A549 (cell line): ENCODE measurements at regions of chr2 and their contacts with region 1.

Region 1: DNA sequence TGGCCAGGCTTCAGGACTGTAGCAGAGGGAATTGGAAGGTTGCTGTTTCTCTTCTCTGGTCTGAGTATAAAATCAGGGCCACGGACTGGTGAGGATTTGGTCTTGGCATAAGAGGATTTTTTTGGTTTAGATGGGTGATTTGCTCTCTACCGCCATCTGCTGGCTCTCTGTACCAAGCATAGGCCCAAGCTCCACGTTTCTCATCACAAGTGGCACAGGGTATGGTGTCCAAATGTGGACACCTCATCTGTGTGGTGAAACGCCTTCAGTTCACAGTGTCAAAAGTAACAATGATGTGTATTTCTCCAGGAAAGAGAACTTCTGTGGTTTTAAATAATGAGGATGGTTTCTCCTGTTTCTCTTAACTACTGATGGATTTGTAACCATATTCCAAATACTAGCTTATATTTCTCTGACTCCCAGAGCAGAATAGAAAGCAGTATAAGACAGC is 115.1 kb downstream of the EML6 start:
- DNase-seq: peak; percentile 69 to 75
- ATAC-seq: peak; percentile 89 to 95
- H3K4me3 ChIP-seq: no peak overlapping the region
- H3K27ac ChIP-seq: no peak overlapping the region
- H3K4me1 ChIP-seq: 0 out of 3 replicates have a peak, but pooled peaks cover 2% of the 10 kb centered on the region
- CTCF ChIP-seq: peak; percentile 96
- EP300 ChIP-seq: no peak
- POLR2A ChIP-seq: no peak
- RAD21 ChIP-seq: peak; percentile 79

Region 2: DNA sequence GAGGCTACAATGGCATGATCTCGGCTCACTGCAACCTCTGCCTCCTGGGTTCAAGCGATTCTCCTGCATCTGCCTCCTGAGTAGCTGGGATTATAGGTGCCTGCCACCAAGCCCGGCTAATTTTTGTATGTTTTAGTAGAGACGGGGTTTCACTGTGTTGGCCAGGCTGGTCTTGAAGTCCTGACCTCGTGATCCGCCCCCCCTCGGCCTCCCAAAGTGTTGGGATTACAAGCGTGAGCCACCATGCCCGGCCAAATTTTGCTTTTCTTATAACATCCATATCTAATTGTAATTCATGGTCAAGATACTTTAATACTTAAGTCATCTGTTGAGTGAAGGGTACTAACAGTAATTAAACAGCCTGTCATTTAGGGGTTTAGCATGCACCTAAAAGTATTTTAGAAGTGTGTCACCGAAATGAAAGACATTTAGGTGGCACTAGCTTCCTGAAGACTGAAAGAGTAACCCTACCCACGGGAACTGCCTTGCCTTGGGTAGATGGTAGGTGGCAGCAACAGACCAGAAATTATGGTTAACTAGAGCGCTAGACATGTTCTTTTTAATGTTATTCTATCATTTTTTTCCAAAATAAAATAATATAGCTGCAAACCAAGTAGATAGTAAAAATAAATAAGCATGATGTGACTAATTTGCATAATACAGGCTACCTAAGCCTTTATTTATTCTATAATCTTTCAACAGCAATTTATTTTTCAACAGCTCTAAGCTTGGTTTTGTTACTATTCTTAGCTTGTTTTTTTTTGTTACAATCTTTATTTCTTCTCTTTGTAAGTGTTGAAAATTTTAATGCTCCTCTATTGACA is 731.8 kb before region 1 on chr2:
- CTCF ChIA-PET with region 1: interaction called, 24 read pairs
- POLR2A ChIA-PET with region 1: no interaction called
- DNase-seq: peak; percentile 51 to 72
- ATAC-seq: peak; percentile 83 to 88
- H3K4me3 ChIP-seq: no peak overlapping the region
- H3K27ac ChIP-seq: peak overlapping the region in 1 of 2 experiments; percentile 22; a peak in 1 of 6 replicates
- H3K4me1 ChIP-seq: peaks cover 19% of the 10 kb centered on the region
- CTCF ChIP-seq: peak; percentile 94
- EP300 ChIP-seq: no peak
- POLR2A ChIP-seq: no peak
- RAD21 ChIP-seq: peak; percentile 92 to 94

Region 3: DNA sequence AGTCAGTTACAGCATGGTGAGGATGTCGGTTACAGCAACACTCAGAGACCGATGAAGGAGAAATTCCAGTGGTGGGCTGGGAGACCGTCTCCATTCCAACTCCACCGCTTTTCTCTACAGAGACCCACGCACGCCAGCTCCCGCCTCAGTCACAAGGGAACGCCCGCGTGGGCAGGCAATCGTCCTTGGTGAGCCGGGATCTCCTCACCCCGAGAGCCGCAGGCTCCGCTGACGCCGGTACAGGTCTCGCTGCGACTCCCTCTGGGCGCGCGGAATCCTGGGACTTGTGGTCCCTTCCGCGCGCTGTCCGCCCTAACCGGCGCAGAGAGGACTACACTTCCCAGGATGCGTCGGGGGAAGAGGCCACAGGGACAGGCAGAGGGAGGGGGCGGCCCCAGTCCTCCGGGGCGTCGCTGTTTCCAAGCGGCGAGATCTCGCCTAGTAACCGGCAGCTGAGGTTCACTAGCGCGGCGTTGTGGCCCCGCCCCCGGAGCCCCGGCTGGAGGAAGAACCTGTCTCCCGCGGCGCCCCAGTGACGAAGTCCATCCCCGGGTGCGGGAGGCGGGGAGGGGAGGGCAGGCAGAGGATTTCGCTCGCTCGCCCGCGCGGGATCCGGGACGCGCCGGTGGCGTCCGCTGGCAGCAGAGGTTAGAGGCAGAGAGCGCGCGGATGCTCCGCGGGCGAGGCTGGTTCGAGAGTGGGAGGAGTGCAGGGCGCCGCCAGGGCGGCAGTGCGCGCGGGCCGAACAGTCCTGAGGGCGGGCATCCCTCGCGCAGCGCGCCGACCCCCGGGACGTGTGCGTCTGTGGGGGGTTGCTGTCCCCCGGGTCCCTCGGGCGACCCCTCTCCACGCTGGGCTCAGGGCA is 115.2 kb before region 1 on chr2 and contains the start of gene EML6:
- CTCF ChIA-PET with region 1: interaction called, 11 read pairs
- POLR2A ChIA-PET with region 1: no interaction called
- DNase-seq: peak; percentile 97 to 99
- ATAC-seq: peak; percentile 95 to 99
- H3K4me3 ChIP-seq: peak within 1 kb of the TSS; percentile 49
- H3K27ac ChIP-seq: peak within 1 kb of the TSS; percentile 62 to 85
- H3K4me1 ChIP-seq: peaks cover 9% of the 10 kb centered on the region
- CTCF ChIP-seq: peak; percentile 27; the same call in 2 of the 3 replicates
- EP300 ChIP-seq: no peak
- POLR2A ChIP-seq: peak; percentile 92
- RAD21 ChIP-seq: peak in 1 of 2 experiments; percentile 14; a peak in 1 of 5 replicates
- polyA plus RNA-seq, gene EML6: 1.5 and 3.0 TPM in 2 replicates

Region 4: DNA sequence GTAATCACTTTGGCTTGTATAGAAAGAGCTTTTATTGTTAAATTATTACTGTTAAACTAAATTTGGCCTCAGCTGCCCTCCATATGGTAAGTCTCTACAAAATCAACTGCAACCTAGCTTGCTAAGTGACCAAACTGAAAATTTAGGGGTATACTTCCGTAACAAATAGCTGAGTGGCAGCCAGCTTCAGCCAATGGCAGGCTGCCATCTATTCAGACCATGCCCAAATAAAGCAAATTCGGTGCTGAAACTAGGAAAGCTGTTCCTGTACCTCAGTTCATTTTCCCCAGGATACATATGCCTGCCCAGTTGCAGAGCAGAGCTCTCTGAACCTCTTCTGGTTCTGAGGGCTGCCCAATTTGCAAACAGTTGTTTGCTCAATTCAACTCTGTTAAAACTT is 20.4 kb before region 1 on chr2:
- CTCF ChIA-PET with region 1: interaction called, 25 read pairs
- POLR2A ChIA-PET with region 1: no interaction called
- DNase-seq: no peak
- ATAC-seq: no peak
- H3K4me3 ChIP-seq: no peak overlapping the region
- H3K27ac ChIP-seq: no peak overlapping the region
- H3K4me1 ChIP-seq: no peaks in the 10 kb centered on the region
- CTCF ChIP-seq: no peak
- EP300 ChIP-seq: no peak
- POLR2A ChIP-seq: no peak
- RAD21 ChIP-seq: no peak

Region 5: GRCh38 chr2:54824567-54824966 is 14.0 kb before region 1 on chr2:
- CTCF ChIA-PET with region 1: interaction called, 44 read pairs
- POLR2A ChIA-PET with region 1: no interaction called
- DNase-seq: no peak
- ATAC-seq: no peak
- H3K4me3 ChIP-seq: no peak overlapping the region
- H3K27ac ChIP-seq: no peak overlapping the region
- H3K4me1 ChIP-seq: no peaks in the 10 kb centered on the region
- CTCF ChIP-seq: no peak
- EP300 ChIP-seq: no peak
- POLR2A ChIP-seq: no peak
- RAD21 ChIP-seq: no peak

Region 6: GRCh38 chr2:54859997-54860686 is 21.5 kb after region 1 on chr2:
- CTCF ChIA-PET with region 1: interaction called, 21 read pairs
- POLR2A ChIA-PET with region 1: no interaction called
- DNase-seq: peak; percentile 45 to 55
- ATAC-seq: peak; percentile 67 to 87
- H3K4me3 ChIP-seq: no peak overlapping the region
- H3K27ac ChIP-seq: peak overlapping the region; percentile 17 to 81; a peak in 4 of 6 replicates
- H3K4me1 ChIP-seq: peaks cover 32% of the 10 kb centered on the region
- CTCF ChIP-seq: no peak
- EP300 ChIP-seq: no peak
- POLR2A ChIP-seq: no peak
- RAD21 ChIP-seq: no peak; a peak in 1 of 5 replicates